Aorta (tissue), 5 donors: ENCODE measurements at regions of chr7 and their contacts with region 1.

Region 1: GRCh38 chr7:142943706-142944268 is 4.5 kb downstream of the LLCFC1 start:
- DNase-seq: no peak
- ATAC-seq: peak; percentile 9
- H3K4me3 ChIP-seq: no peak overlapping the region
- H3K27ac ChIP-seq: no peak overlapping the region
- H3K4me1 ChIP-seq: no peaks in the 10 kb centered on the region
- H3K27me3 ChIP-seq: no peaks in the 10 kb centered on the region

Region 2: GRCh38 chr7:142925413-142925812 is 18.4 kb before region 1 on chr7:
- intact Hi-C with region 1: no loop called
- DNase-seq: no peak
- ATAC-seq: no peak
- H3K4me3 ChIP-seq: no peak overlapping the region
- H3K27ac ChIP-seq: no peak overlapping the region
- H3K4me1 ChIP-seq: no peaks in the 10 kb centered on the region
- H3K27me3 ChIP-seq: no peaks in the 10 kb centered on the region

Region 3: GRCh38 chr7:142964502-142965246 is 20.9 kb after region 1 on chr7:
- intact Hi-C with region 1: loop called in 1 of 2 experiments (anchors 2 kb)
- DNase-seq: no peak
- ATAC-seq: no peak
- H3K4me3 ChIP-seq: no peak overlapping the region
- H3K27ac ChIP-seq: no peak overlapping the region
- H3K4me1 ChIP-seq: no peaks in the 10 kb centered on the region
- H3K27me3 ChIP-seq: peaks cover 0 to 3% of the 10 kb centered on the region in 2 donors

Region 4: GRCh38 chr7:143467722-143468121 is 523.9 kb after region 1 on chr7:
- intact Hi-C with region 1: no loop called
- DNase-seq: no peak
- ATAC-seq: no peak
- H3K4me3 ChIP-seq: no peak overlapping the region
- H3K27ac ChIP-seq: no peak overlapping the region
- H3K4me1 ChIP-seq: no peaks in the 10 kb centered on the region
- H3K27me3 ChIP-seq: no peaks in the 10 kb centered on the region